ENCODE measurements at regions of chr15 and their contacts with region 1.

Region 1: GRCh38 chr15:78540141-78540928 is at the start of gene PSMA4:
- DNase-seq: peak; percentile 55
- ATAC-seq: peak; percentile 96
- H3K4me3 ChIP-seq: peak within 1 kb of the TSS; percentile 74 to 96
- H3K27ac ChIP-seq: peak within 1 kb of the TSS; percentile 82
- H3K4me1 ChIP-seq: peaks cover 17% of the 10 kb centered on the region
- H3K27me3 ChIP-seq: no peaks in the 10 kb centered on the region
- CTCF ChIP-seq: no peak
- total RNA-seq, gene PSMA4: 303 TPM

Region 2: DNA sequence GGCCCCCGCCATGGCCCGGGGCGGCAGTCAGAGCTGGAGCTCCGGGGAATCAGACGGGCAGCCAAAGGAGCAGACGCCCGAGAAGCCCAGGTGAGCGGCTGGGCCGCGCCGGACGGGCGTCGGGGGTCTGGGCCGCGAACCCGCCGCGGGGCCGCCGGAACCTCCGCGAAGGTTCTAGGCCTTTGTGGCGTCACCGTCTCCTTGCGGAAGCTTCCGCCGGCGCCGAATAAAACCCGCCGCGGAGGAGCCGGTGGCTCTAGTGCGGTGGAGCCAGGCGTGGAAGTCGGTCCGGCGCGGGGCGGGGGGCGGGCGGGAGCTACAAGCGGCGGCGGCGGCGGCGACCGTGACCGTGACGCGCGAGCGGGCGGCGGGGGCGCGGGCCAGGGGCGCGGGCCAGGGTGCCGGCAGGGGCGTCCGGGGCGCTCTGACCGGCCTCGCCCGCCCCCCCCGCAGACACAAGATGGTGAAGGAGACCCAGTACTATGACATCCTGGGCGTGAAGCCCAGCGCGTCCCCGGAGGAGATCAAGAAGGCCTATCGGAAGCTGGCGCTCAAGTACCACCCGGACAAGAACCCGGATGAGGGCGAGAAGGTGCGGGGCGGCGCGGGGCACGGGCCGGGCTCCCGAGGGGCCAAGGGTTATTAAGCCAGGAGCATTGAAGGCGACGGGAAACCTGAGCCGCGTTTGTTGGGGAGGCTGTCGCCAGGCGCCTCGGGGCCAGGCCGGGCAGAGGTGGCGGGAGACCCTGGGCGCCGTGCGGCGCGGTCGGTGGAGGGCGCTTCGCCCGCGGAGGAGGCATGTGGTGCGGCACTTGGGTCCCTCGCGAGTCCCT is 275.8 kb before region 1 on chr15 and contains the start of gene DNAJA4:
- CTCF ChIA-PET with region 1: no interaction called
- POLR2A ChIA-PET with region 1: no interaction called
- in situ Hi-C with region 1: no loop called
- intact Hi-C with region 1: no loop called
- DNase-seq: no peak
- ATAC-seq: peak; percentile 78
- H3K4me3 ChIP-seq: peak within 1 kb of the TSS; percentile 49 to 61
- H3K27ac ChIP-seq: peak within 1 kb of the TSS; percentile 69
- H3K4me1 ChIP-seq: peaks cover 12% of the 10 kb centered on the region
- H3K27me3 ChIP-seq: no peaks in the 10 kb centered on the region
- CTCF ChIP-seq: peak; percentile 56
- total RNA-seq, gene DNAJA4: 11.1 TPM

Region 3: GRCh38 chr15:78284758-78285157 is 255.6 kb before region 1 on chr15:
- CTCF ChIA-PET with region 1: no interaction called
- POLR2A ChIA-PET with region 1: no interaction called
- in situ Hi-C with region 1: no loop called
- intact Hi-C with region 1: no loop called
- DNase-seq: no peak
- ATAC-seq: no peak
- H3K4me3 ChIP-seq: no peak overlapping the region
- H3K27ac ChIP-seq: no peak overlapping the region
- H3K4me1 ChIP-seq: no peaks in the 10 kb centered on the region
- H3K27me3 ChIP-seq: no peaks in the 10 kb centered on the region
- CTCF ChIP-seq: peak; percentile 29; the same call in 1 of the 2 replicates

Region 4: GRCh38 chr15:78552597-78552996 is 12.3 kb after region 1 on chr15:
- CTCF ChIA-PET with region 1: no interaction called
- POLR2A ChIA-PET with region 1: interaction called, 13 read pairs
- in situ Hi-C with region 1: no loop called
- intact Hi-C with region 1: no loop called
- DNase-seq: no peak
- ATAC-seq: no peak
- H3K4me3 ChIP-seq: no peak overlapping the region
- H3K27ac ChIP-seq: no peak overlapping the region
- H3K4me1 ChIP-seq: no peaks in the 10 kb centered on the region
- H3K27me3 ChIP-seq: no peaks in the 10 kb centered on the region
- CTCF ChIP-seq: no peak

Region 5: GRCh38 chr15:78565097-78565951 is 25.0 kb after region 1 on chr15 and contains the start of gene CHRNA5:
- CTCF ChIA-PET with region 1: no interaction called
- POLR2A ChIA-PET with region 1: interaction called, 13 read pairs
- in situ Hi-C with region 1: no loop called
- intact Hi-C with region 1: no loop called
- DNase-seq: peak; percentile 70
- ATAC-seq: peak; percentile 97
- H3K4me3 ChIP-seq: peak within 1 kb of the TSS; percentile 85 to 95
- H3K27ac ChIP-seq: peak within 1 kb of the TSS; percentile 93
- H3K4me1 ChIP-seq: peaks cover 13% of the 10 kb centered on the region
- H3K27me3 ChIP-seq: no peaks in the 10 kb centered on the region
- CTCF ChIP-seq: no peak
- total RNA-seq, gene CHRNA5: 52.4 TPM

Measured in Panc1 (cell line).